ENCODE measurements at regions of chr1 and their contacts with region 1.

Region 1: GRCh38 chr1:152533327-152533938 is 19.2 kb downstream of the CRCT1 start:
- DNase-seq: peak; percentile 88
- H3K4me3 Mint-ChIP-seq: no peak overlapping the region
- H3K27ac Mint-ChIP-seq: no peak overlapping the region
- H3K4me1 Mint-ChIP-seq: peaks cover 5% of the 10 kb centered on the region
- H3K27me3 Mint-ChIP-seq: no peaks in the 10 kb centered on the region
- CTCF ChIP-seq: peak; percentile 99

Region 2: GRCh38 chr1:152347116-152347728 is 186.2 kb before region 1 on chr1:
- CTCF ChIA-PET with region 1: interaction called, 7 read pairs
- POLR2A ChIA-PET with region 1: no interaction called
- intact Hi-C with region 1: loop called (anchors 5 kb)
- DNase-seq: peak; percentile 90
- H3K4me3 Mint-ChIP-seq: no peak overlapping the region
- H3K27ac Mint-ChIP-seq: no peak overlapping the region
- H3K4me1 Mint-ChIP-seq: no peaks in the 10 kb centered on the region
- H3K27me3 Mint-ChIP-seq: peaks cover 43% of the 10 kb centered on the region
- CTCF ChIP-seq: peak; percentile 98

Region 3: DNA sequence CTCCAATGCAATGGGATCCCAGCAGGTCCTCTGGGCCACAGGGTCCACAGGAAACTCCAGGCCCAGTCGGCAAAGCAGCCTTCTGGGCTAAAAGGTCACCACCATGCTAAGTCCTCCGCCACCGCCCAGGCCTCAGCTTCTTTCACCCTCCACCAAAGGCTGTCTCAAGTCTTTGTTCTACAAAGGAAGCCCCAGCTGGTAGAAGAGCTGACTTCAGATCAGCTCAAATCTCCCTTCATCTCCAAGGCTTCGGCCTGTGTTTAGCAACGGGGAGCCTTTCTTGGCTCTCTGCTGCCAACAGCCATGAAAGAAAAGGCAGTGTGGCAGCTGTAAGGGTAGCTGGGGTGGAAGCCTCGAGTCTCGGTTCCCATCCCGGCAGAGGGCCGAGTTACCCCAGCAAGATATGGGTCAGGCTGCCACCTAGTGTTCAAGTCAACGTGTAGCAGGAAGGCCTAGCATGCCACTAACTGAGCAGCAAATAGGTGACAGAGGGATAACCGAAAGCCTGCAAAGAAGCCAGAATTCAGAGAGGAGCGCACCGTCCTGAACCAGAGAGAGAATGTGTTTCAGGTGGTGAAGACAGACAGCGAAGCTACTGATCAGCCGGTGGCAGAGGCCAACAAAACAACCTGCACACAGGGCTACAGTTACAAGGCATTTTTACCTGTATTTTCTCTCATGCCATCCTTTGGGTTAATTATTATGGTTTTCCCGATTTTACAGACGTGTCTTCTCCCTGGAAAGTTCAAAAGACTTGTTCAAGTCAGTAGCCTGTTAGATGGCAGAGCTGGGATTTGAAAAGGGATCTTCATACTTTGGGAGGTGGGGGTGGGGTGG is 92.6 kb before region 1 on chr1:
- CTCF ChIA-PET with region 1: interaction called, 13 read pairs
- POLR2A ChIA-PET with region 1: interaction called, 3 read pairs
- intact Hi-C with region 1: no loop called
- DNase-seq: peak; percentile 89
- H3K4me3 Mint-ChIP-seq: no peak overlapping the region
- H3K27ac Mint-ChIP-seq: no peak overlapping the region
- H3K4me1 Mint-ChIP-seq: peaks cover 24% of the 10 kb centered on the region
- H3K27me3 Mint-ChIP-seq: no peaks in the 10 kb centered on the region
- CTCF ChIP-seq: peak; percentile 91

Region 4: DNA sequence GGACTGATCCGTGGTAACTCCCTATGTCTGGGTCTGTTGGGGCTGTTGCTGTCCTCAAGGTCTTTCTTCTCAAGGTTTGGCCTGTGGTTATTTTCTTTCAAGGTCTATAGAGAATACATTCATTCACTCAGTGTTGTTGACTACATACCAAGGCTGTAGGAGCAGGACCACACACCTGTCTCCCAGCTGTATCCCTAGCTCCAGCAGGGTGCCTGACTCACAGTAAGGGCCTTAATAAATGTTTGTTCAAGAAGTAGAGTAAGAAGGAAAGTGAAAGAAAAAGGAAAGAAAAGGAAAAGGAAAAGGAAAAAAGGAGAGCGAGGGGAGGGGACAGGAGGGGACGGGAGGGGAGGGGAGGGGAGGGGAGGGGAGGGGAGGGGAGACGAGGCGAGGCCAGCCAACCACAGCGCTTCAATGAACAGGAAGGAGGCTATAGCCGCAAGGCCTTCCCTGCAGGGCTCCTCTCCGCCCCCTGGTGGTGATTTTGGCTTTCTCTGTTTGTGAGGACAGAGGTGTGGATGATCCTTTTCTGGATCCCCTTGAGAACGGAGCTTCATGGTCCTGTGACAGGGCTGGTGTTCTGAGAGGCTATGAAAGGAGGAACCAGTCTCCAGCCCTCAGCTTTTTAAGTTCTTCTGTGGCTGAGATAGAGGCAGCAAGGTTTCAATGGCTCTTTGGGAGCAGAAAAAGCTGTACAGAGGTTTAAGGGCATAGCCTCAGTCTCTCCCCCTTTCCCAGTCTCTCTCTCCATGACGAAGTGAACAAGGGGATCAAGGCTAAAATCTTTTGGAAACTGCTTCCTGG is 53.4 kb before region 1 on chr1:
- CTCF ChIA-PET with region 1: interaction called, 17 read pairs
- POLR2A ChIA-PET with region 1: no interaction called
- intact Hi-C with region 1: no loop called
- DNase-seq: peak; percentile 40
- H3K4me3 Mint-ChIP-seq: no peak overlapping the region
- H3K27ac Mint-ChIP-seq: no peak overlapping the region
- H3K4me1 Mint-ChIP-seq: peaks cover 6% of the 10 kb centered on the region
- H3K27me3 Mint-ChIP-seq: no peaks in the 10 kb centered on the region
- CTCF ChIP-seq: peak; percentile 58

Region 5: DNA sequence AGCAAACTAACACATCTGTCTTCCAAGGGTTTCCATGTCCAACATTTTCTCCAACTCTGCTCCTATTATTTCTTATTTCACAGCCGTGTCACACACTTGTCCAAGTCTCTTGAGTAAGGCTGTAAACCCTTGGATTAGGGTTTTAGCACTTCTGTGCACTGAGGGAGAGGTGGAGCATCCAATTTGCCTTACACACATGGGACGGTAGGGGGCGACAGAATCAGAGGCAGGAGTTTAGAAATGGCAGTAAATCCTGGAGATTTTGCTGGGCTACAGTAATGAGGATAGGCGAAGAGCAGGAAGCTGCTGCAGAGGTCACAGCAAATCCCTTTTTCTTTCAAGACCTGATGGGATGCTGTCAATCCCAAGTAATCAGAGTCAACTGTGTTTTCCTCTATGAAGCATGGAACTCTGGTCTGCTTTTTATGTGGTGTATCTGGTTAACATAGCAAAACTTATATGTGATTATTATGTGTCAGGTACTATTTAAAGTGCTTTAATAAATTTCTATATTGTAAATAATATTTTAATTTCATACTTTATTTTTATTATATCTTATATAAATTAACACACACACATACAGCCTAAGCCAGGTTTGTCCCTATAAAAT is 38.3 kb before region 1 on chr1:
- CTCF ChIA-PET with region 1: interaction called, 75 read pairs
- POLR2A ChIA-PET with region 1: interaction called, 4 read pairs
- intact Hi-C with region 1: loop called (anchors 1 kb)
- DNase-seq: peak; percentile 78
- H3K4me3 Mint-ChIP-seq: no peak overlapping the region
- H3K27ac Mint-ChIP-seq: no peak overlapping the region
- H3K4me1 Mint-ChIP-seq: no peaks in the 10 kb centered on the region
- H3K27me3 Mint-ChIP-seq: no peaks in the 10 kb centered on the region
- CTCF ChIP-seq: peak; percentile 66

Region 6: DNA sequence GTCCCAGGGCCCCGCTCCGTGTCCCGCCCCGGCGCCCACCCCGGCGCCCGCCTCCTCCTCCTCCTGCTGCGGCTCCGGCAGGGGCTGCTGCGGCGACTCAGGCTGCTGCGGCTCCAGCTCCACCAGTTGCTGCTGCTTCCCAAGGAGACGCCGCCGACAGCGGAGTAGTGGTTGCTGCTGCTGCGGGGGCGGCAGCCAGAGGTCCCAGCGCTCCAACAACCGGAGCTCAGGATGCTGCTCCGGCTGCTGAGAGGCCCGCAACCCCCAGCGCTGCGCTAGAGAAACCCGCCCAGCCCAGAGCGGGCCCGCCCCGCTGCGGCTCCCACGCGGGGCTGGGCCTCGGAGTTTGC is 18.0 kb before region 1 on chr1:
- CTCF ChIA-PET with region 1: interaction called, 18 read pairs
- POLR2A ChIA-PET with region 1: interaction called, 4 read pairs
- intact Hi-C with region 1: no loop called
- DNase-seq: no peak
- H3K4me3 Mint-ChIP-seq: no peak overlapping the region
- H3K27ac Mint-ChIP-seq: no peak overlapping the region
- H3K4me1 Mint-ChIP-seq: peaks cover 15% of the 10 kb centered on the region
- H3K27me3 Mint-ChIP-seq: no peaks in the 10 kb centered on the region
- CTCF ChIP-seq: no peak

Measured in MCF 10A (cell line).